Activated B cell treated with CpG ODN at 0.5 μM for 24 hours (primary cell): ENCODE measurements at regions of chr1 and their contacts with region 1.

Region 1: GRCh38 chr1:85259118-85259911 is at the start of gene C1orf52:
- DNase-seq: peak; percentile 99
- ATAC-seq: peak; percentile 96
- H3K4me3 Mint-ChIP-seq: peak within 1 kb of the TSS; percentile 98
- H3K27ac Mint-ChIP-seq: peak within 1 kb of the TSS; percentile 92
- H3K4me1 Mint-ChIP-seq: peaks cover 37% of the 10 kb centered on the region
- H3K27me3 Mint-ChIP-seq: no peaks in the 10 kb centered on the region
- CTCF ChIP-seq: peak; percentile 88
- total RNA-seq, gene C1orf52: 31.4 and 32.0 TPM in 2 replicates

Region 2: DNA sequence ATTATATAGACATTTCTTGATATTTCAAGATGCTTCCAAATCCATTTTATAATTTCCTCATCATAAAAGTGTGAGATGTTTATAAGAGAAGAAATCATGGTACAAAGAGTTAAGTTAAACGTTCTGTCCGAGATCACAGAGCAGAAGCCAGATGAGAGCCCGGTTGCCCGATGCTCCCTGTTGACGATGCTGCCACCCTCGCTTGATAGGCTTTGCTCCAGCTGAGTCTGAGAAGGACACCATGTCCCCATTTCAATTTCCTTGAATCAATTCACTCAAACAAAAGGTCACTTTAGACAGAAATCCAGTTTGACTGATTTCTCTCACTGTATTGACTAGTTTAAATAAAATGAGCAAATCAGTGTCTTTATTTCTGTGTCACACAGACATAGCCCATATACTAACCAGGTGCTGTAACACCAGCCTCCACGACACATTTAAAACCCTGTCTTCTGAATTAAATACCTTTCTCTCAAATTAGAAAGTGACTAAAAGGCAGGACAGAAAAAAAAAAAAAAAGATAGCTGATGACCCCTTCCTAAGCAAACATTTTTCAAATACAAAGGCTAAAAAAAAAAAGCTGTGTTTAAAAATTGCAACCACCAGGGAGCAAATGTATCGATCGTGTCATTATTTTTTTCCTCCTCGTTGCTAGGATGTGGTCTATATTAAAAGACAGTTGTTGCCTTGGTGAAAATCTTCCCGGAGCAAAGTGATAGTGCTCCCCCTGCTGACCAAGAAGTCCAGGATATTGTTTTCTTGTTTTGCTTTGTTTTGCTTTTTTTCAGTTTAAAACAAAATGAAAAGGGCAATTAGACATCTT is 825.8 kb before region 1 on chr1:
- CTCF ChIA-PET with region 1: no interaction called
- POLR2A ChIA-PET with region 1: no interaction called
- intact Hi-C with region 1: loop called (anchors 10 kb)
- DNase-seq: no peak
- ATAC-seq: peak; percentile 59
- H3K4me3 Mint-ChIP-seq: peak overlapping the region; percentile 65
- H3K27ac Mint-ChIP-seq: peak overlapping the region; percentile 15
- H3K4me1 Mint-ChIP-seq: peaks cover 9% of the 10 kb centered on the region
- H3K27me3 Mint-ChIP-seq: no peaks in the 10 kb centered on the region
- CTCF ChIP-seq: peak; percentile 48

Region 3: DNA sequence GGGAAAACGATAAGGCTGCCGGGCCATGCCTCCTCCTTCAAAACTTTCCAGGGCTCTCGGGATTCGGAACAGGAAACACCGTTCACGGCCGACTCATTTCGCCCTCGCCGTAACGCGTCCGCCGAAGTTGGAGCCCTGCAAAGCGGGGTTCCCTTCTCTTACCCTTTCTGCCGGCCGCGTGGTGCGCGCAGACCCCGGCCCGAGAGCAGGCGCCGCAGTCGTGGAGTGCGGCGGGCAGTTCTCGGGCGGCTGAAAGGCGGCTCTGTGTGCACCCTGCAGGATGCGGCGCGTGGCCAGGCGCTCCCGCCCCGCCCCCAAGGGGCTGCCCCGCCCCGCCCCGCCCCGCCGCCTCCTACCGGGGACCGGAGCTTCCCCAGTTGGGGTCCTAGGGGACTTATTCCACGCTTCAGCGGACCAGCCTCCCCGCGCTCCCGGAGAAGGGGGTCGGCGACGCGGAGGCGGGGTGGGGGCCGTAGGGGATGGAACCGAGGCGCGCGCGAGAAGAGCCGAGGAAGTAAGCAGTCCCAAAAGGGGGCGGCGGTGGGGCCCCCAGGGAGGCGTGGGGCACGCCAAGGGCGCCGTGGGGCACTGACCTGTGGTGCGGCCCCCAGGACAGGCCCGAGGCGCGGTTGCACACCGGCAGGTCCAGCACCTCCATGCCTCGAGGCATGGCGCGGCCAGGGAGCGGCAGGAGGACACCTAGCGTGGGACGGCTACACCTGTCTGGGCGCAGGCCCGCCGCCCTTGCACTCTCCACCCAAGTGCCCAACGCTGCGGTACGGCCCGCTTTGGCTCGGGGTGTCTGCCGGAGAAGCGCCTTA is 262.3 kb before region 1 on chr1 and contains the start of gene MCOLN2:
- CTCF ChIA-PET with region 1: no interaction called
- POLR2A ChIA-PET with region 1: interaction called, 5 read pairs
- intact Hi-C with region 1: loop called (anchors 1 kb)
- DNase-seq: peak; percentile 60
- ATAC-seq: peak; percentile 67
- H3K4me3 Mint-ChIP-seq: peak within 1 kb of the TSS; percentile 85
- H3K27ac Mint-ChIP-seq: peak within 1 kb of the TSS; percentile 87
- H3K4me1 Mint-ChIP-seq: peaks cover 63% of the 10 kb centered on the region
- H3K27me3 Mint-ChIP-seq: peaks cover 2% of the 10 kb centered on the region
- CTCF ChIP-seq: no peak
- total RNA-seq, gene MCOLN2: 60.1 and 80.2 TPM in 2 replicates

Region 4: DNA sequence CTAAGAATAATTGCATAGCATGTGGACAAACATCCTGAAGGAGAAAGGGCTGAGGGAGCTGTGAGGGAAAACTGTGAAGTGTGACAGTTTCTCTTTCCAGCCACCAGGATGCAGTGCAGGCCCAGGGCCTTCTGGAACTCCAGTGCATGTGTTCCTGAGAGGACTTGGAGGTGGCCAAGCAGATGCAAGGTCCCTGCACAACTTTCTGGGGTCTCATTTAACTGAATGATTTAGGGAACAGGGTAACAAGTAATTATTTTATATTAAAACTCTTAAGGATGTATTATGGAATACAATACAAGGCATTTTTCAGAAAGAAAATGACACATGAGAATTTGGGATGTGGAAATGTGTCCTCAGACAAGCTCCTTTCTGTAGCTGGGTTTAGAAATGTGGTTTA is 149.8 kb before region 1 on chr1:
- CTCF ChIA-PET with region 1: interaction called, 4 read pairs
- POLR2A ChIA-PET with region 1: no interaction called
- intact Hi-C with region 1: loop called (anchors 1 kb)
- DNase-seq: no peak
- ATAC-seq: no peak
- H3K4me3 Mint-ChIP-seq: no peak overlapping the region
- H3K27ac Mint-ChIP-seq: no peak overlapping the region
- H3K4me1 Mint-ChIP-seq: no peaks in the 10 kb centered on the region
- H3K27me3 Mint-ChIP-seq: no peaks in the 10 kb centered on the region
- CTCF ChIP-seq: no peak

Region 5: DNA sequence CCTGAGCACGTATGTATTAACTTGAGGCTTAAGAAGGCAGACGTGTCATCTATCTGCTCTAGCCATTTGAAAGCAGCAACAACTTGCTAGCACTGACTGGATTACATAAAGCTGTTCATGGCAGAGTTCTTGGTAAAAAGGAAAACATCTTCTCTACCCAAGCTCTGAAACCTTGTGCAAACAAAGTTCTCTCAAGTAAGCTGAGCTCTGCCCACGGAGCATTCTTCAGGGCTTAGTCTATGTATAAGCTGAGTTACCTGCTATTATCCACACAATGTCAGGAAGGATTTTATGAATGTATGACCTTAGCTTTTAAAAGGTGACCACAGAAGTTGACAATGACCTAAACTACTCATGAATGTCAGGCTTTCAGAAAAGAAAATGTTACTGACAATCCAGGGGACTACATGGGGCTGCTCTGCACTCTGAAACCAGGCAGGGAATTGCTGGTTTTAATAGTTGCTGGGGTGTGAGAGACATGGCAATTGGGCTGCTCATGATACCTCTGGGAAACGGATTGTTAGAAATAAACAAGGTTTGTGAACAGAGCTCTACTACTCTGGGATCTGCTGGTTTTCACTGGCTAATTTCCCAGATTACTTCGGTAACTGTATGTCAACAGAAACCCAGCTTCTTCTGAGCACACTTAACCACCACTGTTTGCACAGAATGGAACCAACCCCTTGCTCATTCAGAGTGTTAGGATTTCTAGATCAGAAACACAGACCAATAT is 291.6 kb after region 1 on chr1:
- CTCF ChIA-PET with region 1: no interaction called
- POLR2A ChIA-PET with region 1: no interaction called
- intact Hi-C with region 1: no loop called
- DNase-seq: no peak
- ATAC-seq: no peak
- H3K4me3 Mint-ChIP-seq: no peak overlapping the region
- H3K27ac Mint-ChIP-seq: no peak overlapping the region
- H3K4me1 Mint-ChIP-seq: no peaks in the 10 kb centered on the region
- H3K27me3 Mint-ChIP-seq: peaks cover 4% of the 10 kb centered on the region
- CTCF ChIP-seq: no peak